ENCODE measurements at regions of chr10 and their contacts with region 1.

Region 1: GRCh38 chr10:93916257-93917063 is 22.7 kb downstream of the SLC35G1 start:
- DNase-seq: no peak
- ATAC-seq: peak; percentile 63 to 95 (median 79)
- H3K4me3 ChIP-seq: no peak overlapping the region
- H3K27ac ChIP-seq: no peak overlapping the region
- H3K4me1 ChIP-seq: peaks cover 6% of the 10 kb centered on the region
- H3K27me3 ChIP-seq: no peaks in the 10 kb centered on the region
- CTCF ChIP-seq: peak; percentile 63

Region 2: GRCh38 chr10:93963434-93963833 is 47.0 kb after region 1 on chr10:
- intact Hi-C with region 1: no loop called
- DNase-seq: no peak
- ATAC-seq: no peak
- H3K4me3 ChIP-seq: no peak overlapping the region
- H3K27ac ChIP-seq: no peak overlapping the region
- H3K4me1 ChIP-seq: peaks cover 10% of the 10 kb centered on the region
- H3K27me3 ChIP-seq: no peaks in the 10 kb centered on the region
- CTCF ChIP-seq: no peak

Region 3: GRCh38 chr10:93977442-93977841 is 61.0 kb after region 1 on chr10:
- intact Hi-C with region 1: loop called in 1 of 2 experiments (anchors 5 kb)
- DNase-seq: no peak
- ATAC-seq: peak in 2 of 4 donors; percentile 55 to 61
- H3K4me3 ChIP-seq: no peak overlapping the region
- H3K27ac ChIP-seq: no peak overlapping the region
- H3K4me1 ChIP-seq: no peaks in the 10 kb centered on the region
- H3K27me3 ChIP-seq: no peaks in the 10 kb centered on the region
- CTCF ChIP-seq: no peak

Region 4: GRCh38 chr10:94083662-94084265 is 167.3 kb after region 1 on chr10:
- intact Hi-C with region 1: loop called in 1 of 2 experiments (anchors 5 kb)
- DNase-seq: no peak
- ATAC-seq: no peak
- H3K4me3 ChIP-seq: no peak overlapping the region
- H3K27ac ChIP-seq: no peak overlapping the region
- H3K4me1 ChIP-seq: no peaks in the 10 kb centered on the region
- H3K27me3 ChIP-seq: no peaks in the 10 kb centered on the region
- CTCF ChIP-seq: no peak

Region 5: DNA sequence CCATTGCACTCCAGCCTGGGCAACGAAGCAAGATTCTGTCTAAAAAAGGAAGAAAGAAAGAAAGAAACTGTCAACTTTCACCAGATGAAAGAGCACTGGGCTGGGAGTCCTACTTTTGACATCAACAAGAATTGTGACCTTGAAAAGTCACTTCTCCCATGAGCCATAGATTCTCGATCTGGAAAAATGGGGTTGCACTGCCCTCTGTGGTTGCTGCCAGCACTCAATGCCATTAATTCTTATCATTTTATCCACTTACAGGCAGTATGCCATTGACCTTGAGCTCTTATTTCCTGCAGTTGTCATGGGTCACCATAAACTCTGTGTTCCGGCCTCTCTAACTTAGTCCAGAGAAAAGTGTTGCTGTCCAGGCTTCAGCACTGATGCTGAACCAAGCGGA is 309.1 kb after region 1 on chr10:
- intact Hi-C with region 1: loop called in 1 of 2 experiments (anchors 10 kb)
- DNase-seq: no peak
- ATAC-seq: peak in 3 of 4 donors; percentile 23 to 56 (median 39)
- H3K4me3 ChIP-seq: no peak overlapping the region
- H3K27ac ChIP-seq: no peak overlapping the region
- H3K4me1 ChIP-seq: peaks cover 4% of the 10 kb centered on the region
- H3K27me3 ChIP-seq: no peaks in the 10 kb centered on the region
- CTCF ChIP-seq: peak; percentile 14

Region 6: GRCh38 chr10:94320285-94320914 is 403.9 kb after region 1 on chr10:
- intact Hi-C with region 1: loop called (anchors 2 to 5 kb)
- DNase-seq: peak; percentile 57 to 71
- ATAC-seq: peak; percentile 54 to 83 (median 64)
- H3K4me3 ChIP-seq: no peak overlapping the region
- H3K27ac ChIP-seq: no peak overlapping the region
- H3K4me1 ChIP-seq: no peaks in the 10 kb centered on the region
- H3K27me3 ChIP-seq: no peaks in the 10 kb centered on the region
- CTCF ChIP-seq: peak; percentile 93

Region 7: DNA sequence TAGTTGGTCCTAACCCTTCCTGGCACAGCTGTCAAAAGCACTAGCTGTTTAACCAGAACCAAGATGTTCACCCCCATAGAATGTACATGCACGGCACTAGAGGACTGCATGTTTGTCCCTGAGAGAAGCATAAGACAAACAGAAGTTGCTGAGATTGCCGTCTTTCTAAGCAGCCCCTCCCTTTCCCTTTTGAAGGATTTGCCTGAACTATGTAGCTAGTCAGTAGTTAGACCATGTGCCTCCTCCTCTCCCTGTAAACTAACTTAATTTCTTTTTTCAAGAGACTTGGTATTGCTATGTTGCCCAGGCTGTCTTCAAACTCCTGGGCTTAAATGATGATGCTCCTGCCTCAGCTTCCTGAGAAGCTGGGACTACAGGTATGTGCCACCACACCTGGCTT is 526.6 kb after region 1 on chr10:
- intact Hi-C with region 1: loop called in 1 of 2 experiments (anchors 5 kb)
- DNase-seq: no peak
- ATAC-seq: no peak
- H3K4me3 ChIP-seq: no peak overlapping the region
- H3K27ac ChIP-seq: no peak overlapping the region
- H3K4me1 ChIP-seq: peaks cover 3% of the 10 kb centered on the region
- H3K27me3 ChIP-seq: no peaks in the 10 kb centered on the region
- CTCF ChIP-seq: no peak